ENCODE measurements at regions of chr20 and their contacts with region 1.

Region 1: GRCh38 chr20:50189681-50190582 is 698 bp upstream of the CEBPB start:
- DNase-seq: peak; percentile 90 to 96 (median 92)
- ATAC-seq: peak; percentile 58 to 81 (median 76)
- H3K4me3 ChIP-seq: peak overlapping the region; percentile 76 to 96 (median 88)
- H3K27ac ChIP-seq: peak overlapping the region; percentile 97 to 100 (median 98)
- H3K4me1 ChIP-seq: peaks cover 0 to 51% (median 20%) of the 10 kb centered on the region in 12 donors
- H3K27me3 ChIP-seq: no peaks in the 10 kb centered on the region
- CTCF ChIP-seq: peak; percentile 73 to 84 (median 80)
- POLR2A ChIP-seq: no peak

Region 2: DNA sequence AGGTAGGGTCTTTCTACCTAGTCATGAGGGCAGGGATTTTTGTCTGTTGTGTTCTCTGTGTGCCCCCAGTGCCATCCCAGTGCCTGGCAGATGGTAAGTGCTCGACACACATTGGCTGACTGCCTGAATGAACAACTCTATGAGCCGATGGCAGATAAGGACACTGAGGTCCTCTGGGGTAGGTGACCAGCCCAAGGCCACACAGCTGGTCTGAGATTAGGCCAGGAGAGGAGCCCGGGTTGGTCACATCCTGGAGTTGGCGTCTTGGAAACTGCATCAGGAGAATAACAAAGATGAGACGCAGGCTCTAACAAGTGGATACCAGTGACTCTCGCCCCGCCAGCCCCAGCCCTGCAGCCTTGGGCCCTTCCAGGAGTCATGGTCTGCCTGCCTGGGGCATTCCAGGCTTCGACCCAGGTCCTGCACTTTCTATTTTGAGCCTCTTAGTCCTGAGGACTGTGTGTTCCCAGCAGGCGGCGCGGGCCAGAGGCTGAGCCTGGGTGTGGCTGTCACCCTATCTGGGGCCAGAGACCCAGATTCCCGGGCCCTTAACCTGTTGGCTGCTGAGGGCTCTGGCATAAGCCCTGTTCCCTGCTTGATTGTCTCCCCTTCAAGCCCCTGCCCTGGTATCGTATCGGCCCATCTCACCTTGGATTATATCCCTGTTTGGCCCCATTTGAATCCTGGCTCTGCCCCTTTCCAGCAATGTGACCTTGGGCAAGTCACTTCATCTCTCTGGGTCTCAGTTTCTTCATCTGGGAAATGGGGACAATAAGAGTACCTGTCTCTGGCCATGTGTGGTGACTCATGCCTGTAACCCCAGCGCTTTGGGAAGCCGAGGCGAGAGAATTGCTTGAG is 89.0 kb after region 1 on chr20:
- intact Hi-C with region 1: loop called in 7 of 10 experiments (anchors 5 to 10 kb)
- DNase-seq: peak; percentile 73 to 93 (median 88)
- ATAC-seq: peak; percentile 83 to 91 (median 87)
- H3K4me3 ChIP-seq: peak overlapping the region in 1 of 12 donors; percentile 23
- H3K27ac ChIP-seq: peak overlapping the region; percentile 38 to 94 (median 76)
- H3K4me1 ChIP-seq: peaks cover 0 to 89% (median 17%) of the 10 kb centered on the region in 12 donors
- H3K27me3 ChIP-seq: no peaks in the 10 kb centered on the region
- CTCF ChIP-seq: peak in 11 of 12 donors; percentile 12 to 57 (median 39)
- POLR2A ChIP-seq: no peak

Region 3: GRCh38 chr20:50308513-50309279 is 118.8 kb after region 1 on chr20:
- intact Hi-C with region 1: loop called in 8 of 10 experiments (anchors 2 to 10 kb)
- DNase-seq: peak; percentile 91 to 97 (median 93)
- ATAC-seq: peak; percentile 61 to 92 (median 82)
- H3K4me3 ChIP-seq: peak overlapping the region in 9 of 12 donors; percentile 16 to 50 (median 35)
- H3K27ac ChIP-seq: peak overlapping the region; percentile 62 to 96 (median 91)
- H3K4me1 ChIP-seq: peaks cover 4 to 79% (median 50%) of the 10 kb centered on the region in 12 donors
- H3K27me3 ChIP-seq: no peaks in the 10 kb centered on the region
- CTCF ChIP-seq: peak in 7 of 12 donors; percentile 13 to 45 (median 32)
- POLR2A ChIP-seq: peak in 1 of 2 donors; percentile 40

Region 4: DNA sequence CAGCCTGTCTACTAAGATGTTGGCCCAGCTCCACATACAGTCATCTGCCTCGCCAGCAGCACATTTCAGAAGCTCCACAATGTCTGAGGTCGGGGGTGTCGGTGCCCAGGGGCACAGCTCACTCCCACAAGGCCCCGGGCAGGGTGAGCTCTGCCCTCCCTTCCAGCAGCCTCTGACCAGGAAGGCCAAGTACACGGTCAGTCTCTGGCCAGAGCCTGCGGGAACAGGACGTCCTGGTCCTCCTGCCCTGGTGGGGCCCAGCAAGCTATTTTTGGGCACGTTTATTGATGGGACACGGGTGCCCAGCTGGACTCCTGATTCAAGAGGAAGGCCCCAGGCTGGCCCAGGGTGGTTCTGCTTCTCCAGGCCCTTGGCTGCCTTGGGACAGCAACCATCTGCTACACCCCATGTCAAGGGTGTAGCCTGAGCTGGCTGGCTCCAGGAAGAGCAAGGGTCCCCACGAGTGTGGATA is 205.4 kb after region 1 on chr20:
- intact Hi-C with region 1: loop called in 7 of 10 experiments (anchors 2 to 5 kb)
- DNase-seq: peak; percentile 60 to 96 (median 86)
- ATAC-seq: peak; percentile 70 to 87 (median 85)
- H3K4me3 ChIP-seq: no peak overlapping the region
- H3K27ac ChIP-seq: peak overlapping the region; percentile 62 to 95 (median 81)
- H3K4me1 ChIP-seq: peaks cover 0 to 61% (median 32%) of the 10 kb centered on the region in 12 donors
- H3K27me3 ChIP-seq: no peaks in the 10 kb centered on the region
- CTCF ChIP-seq: no peak
- POLR2A ChIP-seq: no peak

Region 5: DNA sequence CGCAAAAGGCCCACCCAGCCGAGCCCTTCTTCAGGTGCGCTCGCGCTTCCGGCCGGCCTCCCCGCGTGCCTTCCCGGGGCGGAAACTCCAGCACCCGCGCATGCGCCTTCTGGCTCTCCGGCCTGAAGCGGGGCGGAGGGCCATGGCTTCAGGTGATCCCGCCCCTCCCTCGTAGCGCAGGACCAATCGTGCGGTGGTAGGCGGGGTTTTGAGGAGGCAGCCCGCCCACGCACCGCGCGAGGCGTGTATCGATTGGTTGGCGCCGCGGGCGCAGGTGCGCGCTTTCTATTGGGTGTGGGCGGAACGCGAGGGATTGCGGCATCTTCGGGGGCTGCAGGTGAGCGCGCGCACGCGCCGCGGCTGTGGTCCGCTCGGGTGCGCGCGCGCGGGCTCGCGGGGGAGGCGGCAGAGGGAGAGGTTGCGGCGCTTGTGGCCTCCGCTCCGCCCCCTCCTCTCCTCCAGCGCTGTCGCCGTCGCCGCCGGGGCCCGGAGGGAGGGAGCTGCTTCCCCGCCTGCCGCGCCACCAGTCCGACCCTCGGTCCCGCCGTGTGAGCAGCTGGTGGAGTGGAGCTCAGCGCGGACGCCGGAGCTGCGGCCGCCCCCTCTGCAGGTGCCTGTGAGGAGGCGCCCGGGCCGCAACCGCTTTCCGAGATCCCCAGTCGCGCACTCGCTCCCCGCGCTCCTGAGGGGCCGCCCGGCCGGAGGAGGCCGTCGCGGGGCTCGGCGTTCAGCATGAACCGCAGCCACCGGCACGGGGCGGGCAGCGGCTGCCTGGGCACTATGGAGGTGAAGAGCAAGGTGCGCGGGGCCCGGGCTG is 541.3 kb after region 1 on chr20 and contains the start of gene PARD6B:
- intact Hi-C with region 1: loop called in 2 of 10 experiments (anchors 10 kb)
- DNase-seq: peak; percentile 95 to 98 (median 97)
- ATAC-seq: peak; percentile 97 to 99 (median 98)
- H3K4me3 ChIP-seq: peak within 1 kb of the TSS; percentile 60 to 95 (median 78)
- H3K27ac ChIP-seq: peak within 1 kb of the TSS; percentile 33 to 95 (median 82)
- H3K4me1 ChIP-seq: peaks cover 0 to 41% (median 8%) of the 10 kb centered on the region in 12 donors
- H3K27me3 ChIP-seq: peaks cover 0 to 18% (median 0%) of the 10 kb centered on the region in 9 donors
- CTCF ChIP-seq: no peak
- POLR2A ChIP-seq: peak in 1 of 2 donors; percentile 74
- total RNA-seq, gene PARD6B: 2.7 to 12.2 (median 5.1) TPM

Measured in heart left ventricle (tissue), 16 donors.